CD4-positive, alpha-beta memory T cell (primary cell): ENCODE measurements at regions of chr20 and their contacts with region 1.

Region 1: GRCh38 chr20:44217342-44218092 is 6.9 kb upstream of the OSER1 start:
- DNase-seq: peak; percentile 69 to 85 (median 74)
- H3K4me3 ChIP-seq: peak overlapping the region; percentile 46 to 54
- H3K4me3 Mint-ChIP-seq: peak overlapping the region; percentile 78 to 92 (median 90)
- H3K27ac ChIP-seq: peak overlapping the region; percentile 57
- H3K27ac Mint-ChIP-seq: peak overlapping the region; percentile 78 to 95 (median 93)
- H3K4me1 ChIP-seq: peaks cover 52% of the 10 kb centered on the region
- H3K4me1 Mint-ChIP-seq: peaks cover 41 to 68% (median 51%) of the 10 kb centered on the region in 4 donors
- H3K27me3 ChIP-seq: no peaks in the 10 kb centered on the region
- H3K27me3 Mint-ChIP-seq: no peaks in the 10 kb centered on the region

Region 2: DNA sequence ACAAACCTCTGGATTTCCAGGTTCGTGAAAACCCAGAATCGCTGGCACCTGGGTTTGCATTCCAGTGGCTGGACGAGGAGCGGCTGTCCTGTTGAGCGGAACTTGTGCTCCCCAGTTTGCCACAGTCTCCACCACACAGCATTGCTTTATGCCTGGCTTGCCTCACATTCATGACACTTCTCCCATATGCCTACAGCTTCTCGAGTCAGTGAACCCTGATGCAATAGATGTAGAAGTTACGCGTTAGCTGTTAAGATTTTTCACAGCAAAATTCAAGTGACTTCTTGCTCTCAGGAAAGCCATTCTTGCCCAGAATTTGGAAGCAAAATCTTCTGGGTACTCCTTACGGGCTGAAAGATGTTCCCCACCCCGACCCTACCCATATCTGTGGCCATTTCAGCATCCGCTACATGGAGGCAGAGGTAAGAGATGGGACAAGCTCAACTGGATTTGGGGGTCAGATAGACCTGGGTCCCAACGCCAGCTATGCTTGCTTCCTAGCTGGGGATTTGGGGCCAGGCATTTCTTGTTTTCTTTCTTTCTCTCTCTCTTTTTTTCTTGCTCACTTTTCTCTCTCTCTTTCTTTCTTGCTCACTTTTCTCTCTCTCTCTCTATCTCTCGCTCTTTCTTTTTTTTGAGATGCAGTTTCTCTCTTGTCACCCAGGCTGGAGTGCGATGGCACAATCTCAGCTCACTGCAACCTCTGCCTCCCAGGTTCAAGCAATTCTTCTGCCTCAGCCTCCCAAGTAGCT is 17.2 kb after region 1 on chr20:
- CTCF ChIA-PET with region 1: interaction called, 14 read pairs
- POLR2A ChIA-PET with region 1: interaction called, 5 read pairs
- intact Hi-C with region 1: no loop called
- DNase-seq: no peak
- H3K4me3 ChIP-seq: no peak overlapping the region
- H3K4me3 Mint-ChIP-seq: no peak overlapping the region
- H3K27ac ChIP-seq: no peak overlapping the region
- H3K27ac Mint-ChIP-seq: peak overlapping the region in 1 of 7 donors; percentile 0
- H3K4me1 ChIP-seq: no peaks in the 10 kb centered on the region
- H3K4me1 Mint-ChIP-seq: peaks cover 0 to 2% (median 0%) of the 10 kb centered on the region in 4 donors
- H3K27me3 ChIP-seq: no peaks in the 10 kb centered on the region
- H3K27me3 Mint-ChIP-seq: no peaks in the 10 kb centered on the region

Region 3: GRCh38 chr20:44288252-44288651 is 70.7 kb after region 1 on chr20:
- CTCF ChIA-PET with region 1: interaction called, 70 read pairs
- POLR2A ChIA-PET with region 1: interaction called, 4 read pairs
- intact Hi-C with region 1: no loop called
- DNase-seq: peak in 2 of 5 donors; percentile 11 to 14
- H3K4me3 ChIP-seq: no peak overlapping the region
- H3K4me3 Mint-ChIP-seq: no peak overlapping the region
- H3K27ac ChIP-seq: no peak overlapping the region
- H3K27ac Mint-ChIP-seq: peak overlapping the region in 1 of 7 donors; percentile 25
- H3K4me1 ChIP-seq: no peaks in the 10 kb centered on the region
- H3K4me1 Mint-ChIP-seq: peaks cover 0 to 9% (median under 1%) of the 10 kb centered on the region in 4 donors
- H3K27me3 ChIP-seq: no peaks in the 10 kb centered on the region
- H3K27me3 Mint-ChIP-seq: no peaks in the 10 kb centered on the region

Region 4: DNA sequence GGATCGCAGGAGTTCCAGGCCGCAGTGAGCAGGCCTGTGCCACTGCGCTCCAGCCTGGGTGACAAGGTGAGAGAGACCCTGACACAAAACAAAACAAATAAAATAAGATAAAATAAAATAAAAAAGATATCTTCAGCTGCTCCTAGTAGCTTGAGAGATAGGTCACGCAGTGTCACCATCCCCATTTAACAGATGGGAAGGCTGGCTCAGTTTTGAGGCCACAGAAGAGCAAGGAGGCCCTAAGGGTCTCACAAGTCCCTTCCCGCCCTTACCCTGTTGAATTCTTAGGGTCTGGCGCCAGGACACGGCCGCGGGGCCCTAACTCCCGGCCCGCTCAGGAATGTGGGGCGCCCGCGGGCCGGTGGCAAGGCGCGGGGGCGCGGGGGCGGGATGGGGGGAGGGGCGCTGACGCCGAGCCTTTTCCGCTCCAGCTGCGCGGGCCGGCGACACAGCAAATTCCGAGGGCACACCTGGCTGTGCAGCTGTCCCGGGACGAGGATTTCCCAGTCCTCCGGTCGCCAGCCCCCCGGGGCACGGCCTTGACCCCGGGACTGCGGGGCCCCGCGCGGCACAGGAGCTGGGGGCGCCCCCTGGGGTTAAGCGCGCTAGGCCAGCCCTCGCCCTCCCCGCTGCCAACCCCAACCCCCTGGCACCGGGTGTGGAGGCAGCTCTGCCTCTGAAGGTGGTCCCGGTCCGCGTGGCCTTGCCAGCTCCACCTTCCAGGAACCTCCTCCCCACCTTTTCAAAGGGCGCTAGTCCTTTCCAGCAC is 109.1 kb after region 1 on chr20:
- CTCF ChIA-PET with region 1: interaction called, 20 read pairs
- POLR2A ChIA-PET with region 1: interaction called, 3 read pairs
- intact Hi-C with region 1: no loop called
- DNase-seq: no peak
- H3K4me3 ChIP-seq: no peak overlapping the region
- H3K4me3 Mint-ChIP-seq: peak overlapping the region in 6 of 8 donors; percentile 31 to 75 (median 42)
- H3K27ac ChIP-seq: no peak overlapping the region
- H3K27ac Mint-ChIP-seq: no peak overlapping the region
- H3K4me1 ChIP-seq: no peaks in the 10 kb centered on the region
- H3K4me1 Mint-ChIP-seq: no peaks in the 10 kb centered on the region
- H3K27me3 ChIP-seq: no peaks in the 10 kb centered on the region
- H3K27me3 Mint-ChIP-seq: peaks cover 8 to 9% of the 10 kb centered on the region in 2 donors

Region 5: DNA sequence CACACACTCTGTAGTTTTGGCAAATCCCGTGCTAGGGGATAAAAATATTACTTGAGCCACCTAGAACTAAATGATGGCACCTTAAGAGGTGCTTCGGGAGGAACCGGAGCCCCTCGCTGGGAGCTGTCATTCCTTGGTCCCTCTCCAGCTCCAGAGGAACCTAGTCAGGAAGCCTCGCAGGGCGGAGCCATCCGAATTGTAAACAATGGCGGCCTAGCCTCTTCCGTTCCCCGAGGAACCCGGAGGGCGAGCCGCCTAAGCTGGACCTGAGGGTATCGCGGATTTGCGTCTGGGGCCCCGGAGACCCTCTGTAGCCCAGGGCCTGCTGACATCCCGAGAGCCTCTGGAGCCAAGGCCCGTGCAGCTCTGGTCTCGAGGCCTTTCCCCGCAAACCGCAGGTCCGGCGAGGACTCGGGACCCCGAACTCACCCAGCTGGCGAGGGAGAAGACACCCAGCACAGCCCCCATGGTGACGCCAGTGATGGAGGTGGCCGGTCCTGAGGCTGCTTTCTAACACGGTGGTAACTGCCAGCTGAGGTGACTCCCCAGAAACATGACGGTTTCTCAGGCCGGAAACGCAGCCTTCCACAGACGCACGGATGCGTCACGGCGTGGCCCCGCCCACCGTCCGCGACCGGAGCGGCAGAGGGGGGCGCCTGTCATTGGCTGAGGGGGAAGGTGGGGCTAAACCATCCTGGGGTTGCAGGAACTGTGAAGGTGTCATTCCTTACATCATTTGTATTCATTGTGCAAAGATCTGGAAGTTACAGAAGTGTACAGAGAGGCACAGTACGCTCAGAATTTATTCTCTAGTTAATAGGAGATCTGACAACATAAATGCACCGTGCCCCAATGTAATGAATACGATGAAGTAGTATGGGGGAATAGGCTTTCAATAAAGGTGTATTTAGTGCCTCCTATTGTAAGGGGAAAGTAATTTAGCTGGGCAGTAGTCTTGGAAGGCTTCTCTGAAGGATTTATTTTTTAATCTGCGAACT is 304.3 kb after region 1 on chr20 and contains the start of gene SERINC3:
- CTCF ChIA-PET with region 1: interaction called, 3 read pairs
- POLR2A ChIA-PET with region 1: interaction called, 7 read pairs
- intact Hi-C with region 1: loop called (anchors 5 kb)
- DNase-seq: peak; percentile 97 to 98 (median 98)
- H3K4me3 ChIP-seq: peak within 1 kb of the TSS; percentile 62 to 78
- H3K4me3 Mint-ChIP-seq: peak within 1 kb of the TSS; percentile 81 to 94 (median 90)
- H3K27ac ChIP-seq: peak within 1 kb of the TSS; percentile 99
- H3K27ac Mint-ChIP-seq: peak within 1 kb of the TSS; percentile 82 to 99 (median 95)
- H3K4me1 ChIP-seq: peaks cover 54% of the 10 kb centered on the region
- H3K4me1 Mint-ChIP-seq: peaks cover 29 to 68% (median 54%) of the 10 kb centered on the region in 4 donors
- H3K27me3 ChIP-seq: no peaks in the 10 kb centered on the region
- H3K27me3 Mint-ChIP-seq: no peaks in the 10 kb centered on the region
- total RNA-seq, gene SERINC3: 84.8 to 90.1 TPM

Region 6: DNA sequence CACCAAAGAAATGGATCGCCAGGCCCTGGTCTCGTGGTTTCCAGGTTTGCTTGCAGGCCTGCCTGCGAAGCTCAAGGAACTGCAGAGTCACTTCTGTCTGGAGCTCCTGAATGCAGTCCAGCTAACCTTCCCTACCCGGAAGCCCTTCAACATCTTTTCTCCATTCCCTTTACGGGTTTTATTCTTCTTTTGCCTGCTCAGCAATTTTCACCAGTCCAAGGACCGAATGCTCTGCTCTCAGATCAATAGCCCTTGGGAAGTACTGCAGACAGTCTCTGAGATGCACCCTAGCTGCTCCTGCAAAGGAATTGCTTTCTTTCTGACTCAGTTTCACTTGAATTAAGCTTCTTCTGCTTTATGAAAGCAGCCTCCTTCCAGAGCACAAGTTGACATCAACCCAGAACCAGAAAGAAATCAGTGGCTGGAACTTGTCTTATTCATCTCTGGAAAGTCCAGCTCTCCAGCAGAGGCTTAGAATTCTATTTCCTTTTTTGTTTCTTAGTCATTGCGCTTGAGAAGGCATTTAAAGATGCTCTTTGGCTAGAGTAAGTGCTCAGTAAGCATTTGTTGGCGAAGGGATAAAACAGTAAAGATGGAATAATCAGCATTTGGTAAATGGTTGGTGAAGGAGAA is 649.3 kb after region 1 on chr20:
- CTCF ChIA-PET with region 1: no interaction called
- POLR2A ChIA-PET with region 1: no interaction called
- intact Hi-C with region 1: loop called (anchors 2 kb)
- DNase-seq: no peak
- H3K4me3 ChIP-seq: no peak overlapping the region
- H3K4me3 Mint-ChIP-seq: peak overlapping the region in 7 of 8 donors; percentile 57 to 82 (median 74)
- H3K27ac ChIP-seq: no peak overlapping the region
- H3K27ac Mint-ChIP-seq: peak overlapping the region in 2 of 7 donors; percentile 29 to 65
- H3K4me1 ChIP-seq: peaks cover 4% of the 10 kb centered on the region
- H3K4me1 Mint-ChIP-seq: peaks cover 3 to 10% (median 9%) of the 10 kb centered on the region in 4 donors
- H3K27me3 ChIP-seq: peaks cover 3% of the 10 kb centered on the region
- H3K27me3 Mint-ChIP-seq: peaks cover 5 to 6% of the 10 kb centered on the region in 2 donors